Posterior vena cava (tissue), 2 donors: ENCODE measurements at regions of chr6 and their contacts with region 1.

Region 1: DNA sequence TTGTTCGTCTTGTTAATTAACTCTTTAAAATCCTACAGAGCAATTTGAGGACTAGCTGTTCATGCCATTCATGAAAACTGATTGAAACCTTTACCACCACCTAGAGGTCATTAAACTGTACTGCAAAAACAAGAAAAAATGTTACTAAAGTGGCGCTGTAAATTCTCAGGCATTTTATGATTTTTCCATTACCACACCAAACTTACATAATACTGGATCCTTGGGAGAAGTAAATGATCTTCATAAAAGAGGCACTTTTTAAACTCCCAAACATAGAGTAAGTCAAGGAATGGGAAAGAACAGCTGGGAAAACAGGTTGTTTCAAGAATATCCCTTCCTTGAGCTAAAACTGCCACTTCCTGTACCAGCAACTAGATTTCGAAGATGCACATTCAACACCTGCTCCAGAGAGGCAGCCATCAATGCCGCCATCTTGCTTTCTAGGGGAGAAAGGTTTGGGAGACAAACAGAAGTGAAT is 54.3 kb downstream of the MYLIP start:
- DNase-seq: no peak

Region 2: GRCh38 chr6:15691250-15691869 is 491.9 kb before region 1 on chr6:
- intact Hi-C with region 1: loop called (anchors 5 to 10 kb)
- DNase-seq: peak; percentile 94

Region 3: GRCh38 chr6:16130932-16131387 is 52.3 kb before region 1 on chr6:
- intact Hi-C with region 1: loop called in 1 of 2 experiments (anchors 10 kb)
- DNase-seq: no peak

Region 4: GRCh38 chr6:16140607-16141006 is 42.6 kb before region 1 on chr6:
- intact Hi-C with region 1: loop called (anchors 5 to 10 kb)
- DNase-seq: no peak